ENCODE measurements at regions of chr20 and their contacts with region 1.

Region 1: DNA sequence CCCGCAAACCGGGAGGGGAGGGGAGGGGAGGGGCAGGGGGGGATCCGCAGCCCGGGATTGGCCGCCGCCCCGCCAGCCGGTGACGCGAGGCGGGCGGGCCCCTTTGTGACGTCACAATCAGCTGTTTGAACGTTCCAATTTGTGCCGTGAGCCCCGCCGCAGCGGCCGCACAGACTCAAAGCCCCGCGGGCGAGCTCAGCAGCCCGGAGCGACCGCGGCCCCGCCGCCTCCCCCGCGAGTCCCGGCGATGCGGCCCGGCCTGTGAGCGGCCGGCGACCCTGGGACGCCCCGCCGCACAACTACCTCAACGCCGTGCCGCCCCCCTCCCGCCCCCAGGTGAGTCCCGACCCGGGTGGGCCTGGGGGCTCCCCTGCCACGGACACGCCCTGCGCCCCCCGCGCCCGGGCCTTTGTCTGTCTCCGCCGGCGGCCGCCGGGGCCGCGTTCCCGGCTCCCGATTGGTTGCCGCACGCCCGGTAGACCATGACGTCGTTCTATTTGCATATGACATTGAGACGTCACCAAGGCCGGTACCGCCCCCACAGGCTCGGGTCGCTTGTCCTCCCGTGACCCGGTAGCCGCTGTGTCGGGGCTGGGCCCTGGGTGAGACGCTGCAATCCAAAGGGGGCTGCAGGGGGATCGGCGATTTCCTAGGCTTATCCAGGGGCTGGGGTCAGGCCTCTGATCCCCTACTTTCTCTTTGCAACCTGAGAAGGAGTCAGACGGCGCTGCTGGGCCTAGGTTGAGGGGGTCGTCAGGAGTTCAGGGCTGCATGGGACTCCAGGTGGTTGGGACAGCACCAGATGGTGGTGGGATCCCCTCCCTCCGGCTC is at the start of gene TP53INP2:
- DNase-seq: peak; percentile 92
- H3K4me3 Mint-ChIP-seq: peak within 1 kb of the TSS; percentile 90
- H3K27ac Mint-ChIP-seq: peak within 1 kb of the TSS; percentile 93
- H3K4me1 Mint-ChIP-seq: peaks cover 31% of the 10 kb centered on the region
- H3K27me3 Mint-ChIP-seq: peaks cover 7% of the 10 kb centered on the region
- total RNA-seq, gene TP53INP2: 1.3 to 2.6 TPM

Region 2: DNA sequence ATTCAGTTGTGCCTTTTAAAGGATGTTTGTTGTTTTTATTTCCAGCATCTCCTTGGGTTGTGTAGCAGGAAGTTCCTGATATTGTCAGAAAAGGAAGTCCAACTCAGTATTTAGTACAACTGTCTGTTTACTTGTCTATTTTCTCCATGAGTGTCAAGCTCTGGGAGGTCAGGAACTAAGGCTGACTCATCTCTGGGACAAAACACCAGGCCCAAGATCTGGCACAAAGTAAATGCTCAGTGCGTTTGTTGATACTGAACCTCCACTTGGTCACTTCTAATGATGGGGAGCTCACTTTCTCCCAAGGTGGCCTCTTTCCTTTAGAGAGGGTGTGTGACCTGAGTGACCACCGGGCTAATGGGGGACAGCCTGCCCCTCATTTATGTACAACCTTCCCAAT is 14.9 kb before region 1 on chr20:
- CTCF ChIA-PET with region 1: interaction called, 10 read pairs
- POLR2A ChIA-PET with region 1: no interaction called
- DNase-seq: no peak
- H3K4me3 Mint-ChIP-seq: no peak overlapping the region
- H3K27ac Mint-ChIP-seq: no peak overlapping the region
- H3K4me1 Mint-ChIP-seq: no peaks in the 10 kb centered on the region
- H3K27me3 Mint-ChIP-seq: no peaks in the 10 kb centered on the region

Measured in activated CD4-positive, alpha-beta T cell treated with anti-CD3 and anti-CD28 coated beads, Interleukin-2, amount 10 ng/mL, durations not matched to agents 7 days and 5 days (primary cell).